HepG2 (cell line): ENCODE measurements at regions of chr14 and their contacts with region 1.

Region 1: GRCh38 chr14:64338616-64339316 is 44.6 kb upstream of the ESR2 start:
- DNase-seq: peak; percentile 93
- ATAC-seq: peak; percentile 92
- H3K4me3 ChIP-seq: peak overlapping the region; percentile 44 to 87 (median 61); a peak in 5 of 6 replicates
- H3K27ac ChIP-seq: peak overlapping the region; percentile 57
- H3K4me1 ChIP-seq: peaks cover 18% of the 10 kb centered on the region
- H3K27me3 ChIP-seq: no peaks in the 10 kb centered on the region
- CTCF ChIP-seq: no peak
- EP300 ChIP-seq: no peak
- POLR2A ChIP-seq: peak; percentile 56 to 82
- RAD21 ChIP-seq: no peak

Region 2: GRCh38 chr14:64387694-64388532 is 49.1 kb after region 1 on chr14 and contains the start of gene MTHFD1:
- CTCF ChIA-PET with region 1: no interaction called
- POLR2A ChIA-PET with region 1: interaction called, 16 read pairs
- in situ Hi-C with region 1: no loop called
- intact Hi-C with region 1: loop called (anchors 5 kb)
- DNase-seq: peak; percentile 99
- ATAC-seq: peak; percentile 94
- H3K4me3 ChIP-seq: peak within 1 kb of the TSS; percentile 66 to 81 (median 66)
- H3K27ac ChIP-seq: peak within 1 kb of the TSS; percentile 84
- H3K4me1 ChIP-seq: peaks cover 67% of the 10 kb centered on the region
- H3K27me3 ChIP-seq: no peaks in the 10 kb centered on the region
- CTCF ChIP-seq: no peak
- EP300 ChIP-seq: no peak
- POLR2A ChIP-seq: peak; percentile 59 to 84
- RAD21 ChIP-seq: 0 out of 2 replicates have a peak, but pooled peaks have one; percentile 15
- total RNA-seq, gene MTHFD1: 106 and 186 TPM in 2 replicates

Region 3: DNA sequence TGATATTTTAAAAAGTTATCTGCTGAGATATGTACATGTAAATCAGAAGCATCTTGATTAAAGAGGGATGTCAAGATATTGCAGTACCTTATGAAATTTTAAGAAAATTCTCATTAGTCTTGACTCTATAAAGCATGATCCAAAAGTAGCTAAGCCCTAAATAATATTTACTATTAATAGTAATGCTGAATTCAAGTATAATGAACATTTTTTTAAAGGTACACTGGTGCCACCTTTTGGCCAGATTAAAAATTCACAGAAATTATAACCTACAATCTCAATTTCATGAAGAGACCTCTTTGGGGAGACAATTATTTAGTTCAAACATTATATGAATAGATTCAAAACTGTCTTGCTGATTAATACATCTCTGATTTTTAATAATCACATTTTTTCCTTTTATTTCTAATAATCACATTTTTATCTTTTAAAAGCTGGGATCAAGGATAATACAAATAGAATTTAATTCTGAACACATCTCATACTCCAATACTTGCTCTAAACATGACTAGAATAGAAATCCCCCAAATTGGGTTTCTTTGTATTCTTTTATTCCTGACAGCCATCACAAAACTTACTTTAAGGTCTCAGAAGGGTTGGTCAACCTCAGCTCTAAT is 140.0 kb after region 1 on chr14:
- CTCF ChIA-PET with region 1: interaction called, 9 read pairs
- POLR2A ChIA-PET with region 1: no interaction called
- in situ Hi-C with region 1: loop called (anchors 5 kb)
- intact Hi-C with region 1: no loop called
- DNase-seq: no peak
- ATAC-seq: no peak
- H3K4me3 ChIP-seq: no peak overlapping the region
- H3K27ac ChIP-seq: no peak overlapping the region
- H3K4me1 ChIP-seq: peaks cover 8% of the 10 kb centered on the region
- H3K27me3 ChIP-seq: no peaks in the 10 kb centered on the region
- CTCF ChIP-seq: peak; percentile 21; the same call in 1 of the 2 replicates
- EP300 ChIP-seq: no peak
- POLR2A ChIP-seq: no peak
- RAD21 ChIP-seq: no peak

Region 4: GRCh38 chr14:64556526-64556925 is 217.8 kb after region 1 on chr14:
- CTCF ChIA-PET with region 1: no interaction called
- POLR2A ChIA-PET with region 1: no interaction called
- in situ Hi-C with region 1: no loop called
- intact Hi-C with region 1: no loop called
- DNase-seq: no peak
- ATAC-seq: no peak
- H3K4me3 ChIP-seq: no peak overlapping the region
- H3K27ac ChIP-seq: no peak overlapping the region
- H3K4me1 ChIP-seq: no peaks in the 10 kb centered on the region
- H3K27me3 ChIP-seq: peaks cover 0 to 19% of the 10 kb centered on the region in 2 experiments; a peak in 2 of 5 replicates
- CTCF ChIP-seq: no peak
- EP300 ChIP-seq: no peak
- POLR2A ChIP-seq: no peak
- RAD21 ChIP-seq: no peak

Region 5: DNA sequence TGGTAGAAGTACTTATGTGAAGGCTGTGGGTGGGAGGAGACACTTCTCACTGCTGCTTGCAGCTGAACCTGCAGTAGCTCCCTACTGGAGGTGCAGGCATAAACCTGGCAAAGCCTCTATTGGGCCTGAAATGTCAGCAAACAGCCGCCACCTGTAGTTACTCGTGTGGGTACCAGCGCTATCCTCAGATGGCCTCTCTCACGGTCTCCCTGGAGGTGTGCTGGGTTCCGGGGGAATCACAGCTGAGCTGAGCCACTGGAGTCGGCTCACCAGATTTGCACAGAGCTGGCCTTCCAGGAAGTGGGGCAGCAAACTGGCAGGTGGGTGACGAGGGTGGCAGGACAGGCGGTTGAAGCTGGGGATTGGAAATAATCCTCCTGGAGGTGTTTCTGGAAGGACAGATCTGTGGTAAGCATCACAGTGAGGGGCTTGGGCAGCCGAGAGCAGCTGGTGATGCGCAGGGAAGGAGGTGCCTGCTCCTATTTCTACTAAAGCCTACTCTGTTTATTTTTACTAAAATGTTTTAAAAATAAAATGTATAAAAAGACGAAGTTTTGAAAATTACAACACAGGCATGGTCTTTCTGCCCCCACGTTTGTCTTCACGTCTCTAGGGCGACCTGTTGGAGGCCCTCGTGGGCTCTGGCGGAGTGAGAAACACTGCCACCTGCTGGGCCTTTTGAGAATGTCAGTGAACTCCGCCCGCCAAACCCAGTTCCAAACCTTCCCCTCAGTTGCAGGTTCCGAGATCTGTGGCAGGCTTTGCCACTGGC is 297.6 kb after region 1 on chr14:
- CTCF ChIA-PET with region 1: interaction called, 3 read pairs
- POLR2A ChIA-PET with region 1: no interaction called
- in situ Hi-C with region 1: loop called (anchors 10 kb)
- intact Hi-C with region 1: loop called (anchors 5 kb)
- DNase-seq: peak; percentile 27
- ATAC-seq: peak; percentile 84
- H3K4me3 ChIP-seq: no peak overlapping the region; a peak in 1 of 6 replicates
- H3K27ac ChIP-seq: no peak overlapping the region
- H3K4me1 ChIP-seq: peaks cover 28% of the 10 kb centered on the region
- H3K27me3 ChIP-seq: no peaks in the 10 kb centered on the region
- CTCF ChIP-seq: peak; percentile 84
- EP300 ChIP-seq: no peak
- POLR2A ChIP-seq: no peak
- RAD21 ChIP-seq: peak; percentile 65